Esophagus muscularis mucosa (tissue), 4 donors: ENCODE measurements at regions of chr1 and their contacts with region 1.

Region 1: GRCh38 chr1:224922404-224923164 is 6.9 kb upstream of the DNAH14 start:
- DNase-seq: no peak
- H3K4me3 ChIP-seq: no peak overlapping the region
- H3K27ac ChIP-seq: no peak overlapping the region
- H3K4me1 ChIP-seq: peaks cover 0 to 6% (median 0%) of the 10 kb centered on the region in 4 donors
- H3K27me3 ChIP-seq: no peaks in the 10 kb centered on the region
- CTCF ChIP-seq: peak; percentile 65 to 79 (median 73)
- EP300 ChIP-seq: no peak
- POLR2A ChIP-seq: no peak

Region 2: DNA sequence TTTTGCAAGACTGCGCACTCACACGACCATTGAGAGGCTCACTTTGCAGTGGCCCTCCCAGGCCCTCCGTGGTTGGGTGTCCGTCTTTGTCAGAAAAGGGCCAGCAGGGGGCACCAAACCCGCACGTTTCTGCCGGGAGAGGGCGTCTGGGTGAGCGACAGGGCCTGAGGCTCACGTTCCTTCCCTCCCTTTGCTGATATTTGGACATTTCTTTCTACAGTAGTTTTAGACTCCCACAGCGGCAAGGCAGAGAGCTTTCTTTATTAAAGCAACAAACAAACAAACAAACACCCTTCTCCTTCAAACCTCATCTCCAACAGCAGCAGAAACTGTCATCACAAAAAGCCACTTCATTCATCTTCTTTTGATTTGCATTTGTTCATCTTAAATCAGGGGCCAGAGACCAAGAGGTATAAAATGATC is 408.8 kb before region 1 on chr1:
- intact Hi-C with region 1: loop called (anchors 2 kb)
- DNase-seq: peak; percentile 95
- H3K4me3 ChIP-seq: no peak overlapping the region
- H3K27ac ChIP-seq: no peak overlapping the region
- H3K4me1 ChIP-seq: peaks cover 0 to 23% (median 15%) of the 10 kb centered on the region in 4 donors
- H3K27me3 ChIP-seq: no peaks in the 10 kb centered on the region
- CTCF ChIP-seq: peak; percentile 84 to 87 (median 84)
- EP300 ChIP-seq: no peak
- POLR2A ChIP-seq: no peak

Region 3: DNA sequence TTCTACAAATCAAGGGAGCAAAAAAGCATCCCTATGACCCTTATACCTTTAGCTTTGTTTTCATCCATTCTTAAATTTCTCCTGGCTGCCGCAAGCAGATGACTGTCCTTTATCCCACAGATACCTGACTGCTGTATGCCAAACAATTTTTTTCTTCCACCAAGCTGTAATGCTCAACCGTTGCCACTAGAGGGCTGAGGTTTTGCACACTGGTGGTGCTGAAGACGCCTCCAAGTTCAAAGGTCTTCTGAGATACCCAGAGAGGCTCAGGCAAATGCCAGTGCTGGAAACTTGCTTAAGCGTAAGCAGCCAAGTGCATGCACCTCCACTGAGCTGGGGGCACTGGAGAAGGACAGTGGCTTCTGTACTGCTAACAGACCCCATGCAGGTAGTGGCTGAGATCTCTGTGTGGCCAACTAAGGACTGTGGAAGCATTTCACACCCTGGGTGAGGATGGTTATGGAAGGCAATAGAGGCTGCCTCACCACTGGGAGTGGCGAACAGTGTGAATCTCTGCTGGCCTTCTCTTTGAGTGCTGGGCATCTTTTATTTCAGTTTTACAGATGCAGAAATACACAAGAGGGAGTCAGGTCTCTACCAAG is 277.9 kb before region 1 on chr1:
- intact Hi-C with region 1: loop called (anchors 5 kb)
- DNase-seq: no peak
- H3K4me3 ChIP-seq: no peak overlapping the region
- H3K27ac ChIP-seq: no peak overlapping the region
- H3K4me1 ChIP-seq: no peaks in the 10 kb centered on the region
- H3K27me3 ChIP-seq: no peaks in the 10 kb centered on the region
- CTCF ChIP-seq: peak; percentile 72 to 92 (median 75)
- EP300 ChIP-seq: no peak
- POLR2A ChIP-seq: no peak